ENCODE measurements at regions of chr14 and their contacts with region 1.

Region 1: GRCh38 chr14:23174276-23175184 is 8.9 kb downstream of the SLC7A8 start:
- DNase-seq: no peak
- H3K4me3 Mint-ChIP-seq: no peak overlapping the region
- H3K27ac Mint-ChIP-seq: no peak overlapping the region
- H3K4me1 Mint-ChIP-seq: peaks cover 6% of the 10 kb centered on the region
- H3K27me3 Mint-ChIP-seq: peaks cover 10% of the 10 kb centered on the region

Region 2: DNA sequence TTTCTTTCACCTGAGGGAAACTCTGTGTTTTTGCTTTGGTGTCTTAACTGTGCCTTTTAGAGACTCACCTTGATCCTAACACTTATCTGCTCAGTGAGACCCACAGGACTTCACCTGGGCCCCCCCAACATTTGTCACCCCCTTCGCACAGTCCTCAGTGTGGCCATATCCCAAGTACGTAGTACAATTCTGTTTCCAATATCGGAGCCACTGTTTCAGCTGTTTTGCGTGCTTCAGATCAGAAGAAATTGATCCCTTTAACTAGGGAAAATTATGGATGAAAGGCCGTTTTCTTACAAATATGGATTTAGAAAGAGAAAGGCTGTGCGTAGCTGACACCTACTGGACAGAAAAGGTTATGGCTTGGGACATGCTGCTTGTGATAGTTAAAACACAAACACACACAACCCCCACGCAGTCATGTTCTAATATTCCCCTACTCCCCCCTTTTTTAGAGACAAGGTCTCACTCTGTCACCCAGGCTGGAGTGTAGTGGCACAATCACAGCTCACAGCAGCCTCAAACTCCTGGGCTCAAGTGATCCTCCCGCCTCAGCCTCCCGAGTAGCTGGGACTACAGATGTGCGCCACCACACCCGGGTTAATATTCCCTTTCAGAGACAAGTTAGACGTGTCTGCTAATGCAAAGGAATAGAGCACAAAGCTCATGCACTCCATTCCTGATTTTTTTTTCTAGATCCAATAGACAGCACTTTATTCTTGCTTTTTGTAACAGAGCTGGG is 12.6 kb after region 1 on chr14:
- CTCF ChIA-PET with region 1: interaction called, 14 read pairs
- POLR2A ChIA-PET with region 1: no interaction called
- intact Hi-C with region 1: no loop called
- DNase-seq: peak; percentile 34
- H3K4me3 Mint-ChIP-seq: no peak overlapping the region
- H3K27ac Mint-ChIP-seq: no peak overlapping the region
- H3K4me1 Mint-ChIP-seq: no peaks in the 10 kb centered on the region
- H3K27me3 Mint-ChIP-seq: no peaks in the 10 kb centered on the region

Measured in activated CD4-positive, alpha-beta memory T cell treated with anti-CD3 and anti-CD28 coated beads for 36 hours (primary cell).